ENCODE measurements at regions of chr12 and their contacts with region 1.

Region 1: DNA sequence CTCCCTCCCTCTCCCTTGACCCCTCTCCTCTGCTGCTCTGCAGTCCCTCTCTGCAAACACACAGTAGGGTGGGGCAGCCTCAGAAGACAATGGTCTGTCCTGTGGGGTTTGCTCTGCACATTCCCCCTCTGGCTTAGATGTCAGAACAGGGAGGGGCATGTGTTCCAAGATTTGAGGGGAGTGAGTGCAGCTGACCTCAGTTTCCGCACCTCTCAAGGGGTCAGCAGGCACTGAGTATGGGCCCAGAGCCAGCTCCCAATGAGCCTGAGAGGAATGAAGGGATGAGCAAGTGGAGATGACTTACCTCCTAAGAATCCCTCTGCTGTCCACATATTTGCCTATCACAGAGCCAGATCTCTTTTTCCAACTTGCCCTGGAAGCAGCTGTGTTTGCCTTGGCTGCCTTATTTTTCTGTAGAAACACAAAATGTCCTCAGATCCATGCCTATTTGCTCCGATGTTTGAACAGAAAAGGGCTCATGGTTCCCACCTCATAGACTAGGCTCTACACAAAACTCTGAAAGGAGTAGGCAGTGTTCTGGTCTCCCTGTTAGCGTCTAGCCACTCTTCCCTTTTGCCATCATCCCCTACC is 111.4 kb downstream of the CRACR2A start:
- DNase-seq: no peak
- ATAC-seq: no peak
- H3K4me3 ChIP-seq: no peak overlapping the region
- H3K27ac ChIP-seq: no peak overlapping the region
- H3K4me1 ChIP-seq: no peaks in the 10 kb centered on the region
- H3K27me3 ChIP-seq: peaks cover 0 to 16% of the 10 kb centered on the region in 2 experiments; a peak in 4 of 5 replicates
- CTCF ChIP-seq: no peak
- EP300 ChIP-seq: no peak
- POLR2A ChIP-seq: no peak
- RAD21 ChIP-seq: no peak

Region 2: DNA sequence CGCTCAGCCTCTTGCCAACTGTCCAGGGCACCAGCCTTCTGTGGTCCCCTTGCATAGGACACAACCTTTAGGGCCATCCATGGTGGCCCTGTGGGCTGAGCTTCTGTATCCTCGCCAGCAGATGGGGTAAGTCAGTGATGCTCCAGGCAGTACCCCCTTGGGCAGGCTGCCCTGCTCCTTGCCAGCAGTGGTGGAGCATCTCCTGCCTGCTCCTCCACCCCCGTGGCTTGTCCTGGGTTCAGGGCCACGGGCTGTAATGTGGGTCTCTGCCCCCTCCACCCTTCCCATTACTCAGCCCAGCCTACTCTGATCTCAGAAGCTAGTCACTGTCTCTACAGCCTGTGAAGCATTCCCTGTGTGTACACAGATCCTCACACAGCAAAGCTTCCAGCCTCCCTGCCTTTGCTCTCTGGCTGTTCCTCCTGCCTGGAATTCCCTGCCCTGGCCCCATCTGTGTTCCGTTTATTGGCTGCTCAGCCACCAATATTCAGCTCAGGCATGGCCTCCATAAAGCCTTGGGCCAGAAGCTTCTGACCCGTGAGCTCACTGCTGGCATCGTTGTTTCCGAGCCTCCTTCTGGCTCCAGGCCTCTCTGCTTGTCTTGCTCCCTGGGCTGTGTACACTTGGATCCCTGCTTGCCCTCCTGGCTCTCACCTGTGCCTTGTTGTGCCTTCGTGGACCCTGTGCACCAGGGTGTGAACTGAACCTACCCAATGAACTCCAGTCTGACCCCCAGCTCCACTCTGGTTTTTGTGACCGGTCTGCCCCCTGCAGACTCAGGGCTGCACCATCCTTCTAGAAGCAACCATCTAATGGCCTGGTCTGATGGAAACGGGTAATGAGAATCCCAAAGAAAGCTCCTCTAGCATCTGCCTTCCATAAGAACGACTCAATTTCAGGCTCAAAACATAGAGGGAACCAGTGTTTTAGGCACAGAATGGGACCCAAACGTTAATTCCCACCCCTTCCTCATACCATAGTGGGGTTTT is 327.6 kb before region 1 on chr12:
- CTCF ChIA-PET with region 1: no interaction called
- POLR2A ChIA-PET with region 1: no interaction called
- in situ Hi-C with region 1: loop called (anchors 10 kb)
- intact Hi-C with region 1: no loop called
- DNase-seq: peak; percentile 40
- ATAC-seq: peak; percentile 88
- H3K4me3 ChIP-seq: no peak overlapping the region
- H3K27ac ChIP-seq: no peak overlapping the region
- H3K4me1 ChIP-seq: no peaks in the 10 kb centered on the region
- H3K27me3 ChIP-seq: peaks cover 13 to 80% of the 10 kb centered on the region in 2 experiments
- CTCF ChIP-seq: peak; percentile 65
- EP300 ChIP-seq: no peak
- POLR2A ChIP-seq: no peak
- RAD21 ChIP-seq: 0 out of 2 replicates have a peak, but pooled peaks have one; percentile 27

Region 3: DNA sequence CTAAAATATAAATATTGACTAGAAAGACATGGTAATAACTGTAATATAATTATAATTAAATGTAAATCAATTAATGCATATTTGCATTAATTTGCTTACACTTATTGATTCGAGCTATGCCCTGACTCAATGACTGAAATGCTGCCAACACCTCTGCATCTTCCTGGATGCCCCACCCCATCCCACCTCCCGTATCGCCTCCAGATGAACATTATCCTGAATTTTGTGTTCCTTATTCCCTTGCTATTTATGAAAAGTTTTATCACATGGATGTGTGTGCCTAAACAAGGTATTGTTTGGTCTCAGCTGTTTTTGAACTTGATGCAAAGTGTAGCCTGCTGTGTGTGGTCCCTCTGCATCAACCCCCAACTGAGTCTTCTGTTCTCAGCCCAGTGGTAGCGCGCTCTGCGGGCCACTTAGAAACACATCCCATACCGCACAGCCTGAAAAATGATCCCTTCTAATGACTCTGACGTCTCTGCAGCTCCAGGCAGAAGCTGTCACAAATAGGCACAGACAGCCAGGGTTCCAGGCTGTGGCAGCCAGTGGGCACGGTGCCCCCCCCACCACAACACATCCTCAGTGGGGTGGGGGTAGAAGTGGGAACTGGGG is 54.0 kb before region 1 on chr12:
- CTCF ChIA-PET with region 1: no interaction called
- POLR2A ChIA-PET with region 1: no interaction called
- in situ Hi-C with region 1: no loop called
- intact Hi-C with region 1: no loop called
- DNase-seq: no peak
- ATAC-seq: no peak
- H3K4me3 ChIP-seq: no peak overlapping the region
- H3K27ac ChIP-seq: no peak overlapping the region
- H3K4me1 ChIP-seq: no peaks in the 10 kb centered on the region
- H3K27me3 ChIP-seq: peaks cover 0 to 17% of the 10 kb centered on the region in 2 experiments; a peak in 1 of 5 replicates
- CTCF ChIP-seq: no peak
- EP300 ChIP-seq: no peak
- POLR2A ChIP-seq: no peak
- RAD21 ChIP-seq: no peak